Endothelial cell of umbilical vein (primary cell): ENCODE measurements at regions of chr12 and their contacts with region 1.

Region 1: GRCh38 chr12:79737875-79738718 is 47.3 kb upstream of the PAWR start:
- DNase-seq: peak; percentile 80
- H3K4me3 ChIP-seq: no peak overlapping the region
- H3K27ac ChIP-seq: no peak overlapping the region
- H3K4me1 ChIP-seq: no peaks in the 10 kb centered on the region
- H3K27me3 ChIP-seq: no peaks in the 10 kb centered on the region
- CTCF ChIP-seq: peak; percentile 48 to 49
- POLR2A ChIP-seq: no peak

Region 2: GRCh38 chr12:79555028-79555930 is 182.8 kb before region 1 on chr12:
- CTCF ChIA-PET with region 1: no interaction called
- POLR2A ChIA-PET with region 1: interaction called, 3 read pairs
- dilution Hi-C with region 1: no loop called
- intact Hi-C with region 1: loop called (anchors 1 kb)
- DNase-seq: peak; percentile 79
- H3K4me3 ChIP-seq: no peak overlapping the region
- H3K27ac ChIP-seq: no peak overlapping the region
- H3K4me1 ChIP-seq: peaks cover 56% of the 10 kb centered on the region
- H3K27me3 ChIP-seq: no peaks in the 10 kb centered on the region
- CTCF ChIP-seq: peak; percentile 43 to 48
- POLR2A ChIP-seq: no peak